ENCODE measurements at regions of chr15 and their contacts with region 1.

Region 1: DNA sequence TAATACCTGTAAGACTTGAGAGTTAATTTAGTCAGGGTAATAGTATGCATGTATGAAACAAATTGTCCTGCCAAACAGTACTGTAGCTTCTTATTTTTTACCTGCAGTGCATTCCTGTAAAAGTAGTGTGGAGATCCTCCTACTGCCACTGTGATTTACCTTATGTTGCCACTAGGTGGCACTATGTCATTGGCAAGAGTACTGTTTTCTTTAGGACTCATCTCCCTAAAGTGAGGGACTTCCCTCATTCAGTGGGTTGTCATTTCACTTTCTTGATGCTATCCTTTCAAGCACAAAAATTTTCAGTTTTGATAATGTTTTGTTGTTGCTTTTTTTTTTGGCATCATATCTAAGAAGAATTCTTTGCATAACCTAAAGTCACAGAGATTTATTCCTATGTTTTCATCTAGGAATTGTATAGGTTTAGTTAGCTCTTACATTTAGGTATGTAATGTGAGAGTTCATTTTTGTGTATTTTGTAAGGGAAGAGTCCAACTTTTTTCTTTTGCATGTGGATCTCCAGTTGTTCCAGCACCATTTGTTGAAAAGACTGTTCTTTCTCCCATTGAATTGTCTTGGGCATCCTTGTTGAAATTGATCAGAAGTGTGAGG is 105.7 kb downstream of the AKAP13 start:
- DNase-seq: peak; percentile 78
- H3K4me3 ChIP-seq: no peak overlapping the region
- H3K27ac ChIP-seq: no peak overlapping the region
- H3K4me1 ChIP-seq: peaks cover 4% of the 10 kb centered on the region
- H3K27me3 ChIP-seq: no peaks in the 10 kb centered on the region
- CTCF ChIP-seq: peak; percentile 58 to 69
- POLR2A ChIP-seq: no peak

Region 2: GRCh38 chr15:85475317-85475701 is 10.8 kb before region 1 on chr15:
- CTCF ChIA-PET with region 1: interaction called, 33 read pairs
- POLR2A ChIA-PET with region 1: no interaction called
- dilution Hi-C with region 1: no loop called
- intact Hi-C with region 1: no loop called
- DNase-seq: peak; percentile 63
- H3K4me3 ChIP-seq: no peak overlapping the region
- H3K27ac ChIP-seq: no peak overlapping the region
- H3K4me1 ChIP-seq: peaks cover 40% of the 10 kb centered on the region
- H3K27me3 ChIP-seq: no peaks in the 10 kb centered on the region
- CTCF ChIP-seq: no peak
- POLR2A ChIP-seq: no peak

Region 3: GRCh38 chr15:85504749-85505676 is 19.0 kb after region 1 on chr15:
- CTCF ChIA-PET with region 1: interaction called, 49 read pairs
- POLR2A ChIA-PET with region 1: no interaction called
- dilution Hi-C with region 1: no loop called
- intact Hi-C with region 1: no loop called
- DNase-seq: peak; percentile 64
- H3K4me3 ChIP-seq: no peak overlapping the region
- H3K27ac ChIP-seq: no peak overlapping the region
- H3K4me1 ChIP-seq: peaks cover 11% of the 10 kb centered on the region
- H3K27me3 ChIP-seq: no peaks in the 10 kb centered on the region
- CTCF ChIP-seq: peak; percentile 34 to 41
- POLR2A ChIP-seq: no peak

Region 4: DNA sequence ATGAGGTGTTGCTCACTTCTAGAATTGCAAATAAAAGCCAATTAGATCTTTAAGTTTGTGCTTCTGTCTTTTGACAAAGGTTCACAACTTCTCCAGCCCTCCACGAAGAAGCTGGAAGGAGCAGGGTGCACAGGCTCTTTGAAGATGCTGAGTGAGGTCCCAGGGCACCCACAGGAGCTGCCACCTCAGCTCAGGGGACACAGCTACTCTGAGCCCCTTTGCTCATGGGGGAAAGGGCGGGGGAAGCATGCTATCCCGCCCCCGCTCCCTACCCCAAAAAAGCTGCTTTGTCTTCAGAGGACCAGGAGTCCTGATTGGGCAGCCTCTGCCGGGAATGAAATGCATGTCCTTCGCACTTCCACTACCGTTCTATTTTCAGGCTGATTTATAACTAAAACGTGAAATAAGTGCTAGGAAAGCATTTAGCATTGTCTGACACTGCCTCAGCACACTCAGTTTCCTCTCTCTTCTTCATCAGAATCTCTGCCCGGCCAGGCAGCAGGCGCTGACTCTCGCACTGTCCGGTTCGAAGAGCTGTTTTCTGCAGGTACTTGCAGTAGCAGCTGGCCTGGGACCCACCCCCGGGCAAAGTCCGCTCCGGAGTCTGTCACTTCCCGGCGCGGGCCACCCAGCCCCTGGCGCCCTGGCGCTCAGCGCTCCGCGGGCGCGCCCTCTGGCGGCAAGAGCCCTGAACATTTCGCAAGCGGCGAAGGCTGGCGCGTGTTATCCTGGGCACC is 354.2 kb after region 1 on chr15:
- CTCF ChIA-PET with region 1: no interaction called
- POLR2A ChIA-PET with region 1: no interaction called
- dilution Hi-C with region 1: no loop called
- intact Hi-C with region 1: loop called (anchors 5 kb)
- DNase-seq: peak; percentile 75
- H3K4me3 ChIP-seq: peak overlapping the region in 2 of 3 experiments; percentile 3 to 9
- H3K27ac ChIP-seq: no peak overlapping the region
- H3K4me1 ChIP-seq: peaks cover 2% of the 10 kb centered on the region
- H3K27me3 ChIP-seq: peaks cover 0 to 4% of the 10 kb centered on the region in 2 experiments
- CTCF ChIP-seq: peak; percentile 94 to 98
- POLR2A ChIP-seq: no peak

Measured in endothelial cell of umbilical vein (primary cell).